ENCODE measurements at regions of chr6 and their contacts with region 1.

Region 1: DNA sequence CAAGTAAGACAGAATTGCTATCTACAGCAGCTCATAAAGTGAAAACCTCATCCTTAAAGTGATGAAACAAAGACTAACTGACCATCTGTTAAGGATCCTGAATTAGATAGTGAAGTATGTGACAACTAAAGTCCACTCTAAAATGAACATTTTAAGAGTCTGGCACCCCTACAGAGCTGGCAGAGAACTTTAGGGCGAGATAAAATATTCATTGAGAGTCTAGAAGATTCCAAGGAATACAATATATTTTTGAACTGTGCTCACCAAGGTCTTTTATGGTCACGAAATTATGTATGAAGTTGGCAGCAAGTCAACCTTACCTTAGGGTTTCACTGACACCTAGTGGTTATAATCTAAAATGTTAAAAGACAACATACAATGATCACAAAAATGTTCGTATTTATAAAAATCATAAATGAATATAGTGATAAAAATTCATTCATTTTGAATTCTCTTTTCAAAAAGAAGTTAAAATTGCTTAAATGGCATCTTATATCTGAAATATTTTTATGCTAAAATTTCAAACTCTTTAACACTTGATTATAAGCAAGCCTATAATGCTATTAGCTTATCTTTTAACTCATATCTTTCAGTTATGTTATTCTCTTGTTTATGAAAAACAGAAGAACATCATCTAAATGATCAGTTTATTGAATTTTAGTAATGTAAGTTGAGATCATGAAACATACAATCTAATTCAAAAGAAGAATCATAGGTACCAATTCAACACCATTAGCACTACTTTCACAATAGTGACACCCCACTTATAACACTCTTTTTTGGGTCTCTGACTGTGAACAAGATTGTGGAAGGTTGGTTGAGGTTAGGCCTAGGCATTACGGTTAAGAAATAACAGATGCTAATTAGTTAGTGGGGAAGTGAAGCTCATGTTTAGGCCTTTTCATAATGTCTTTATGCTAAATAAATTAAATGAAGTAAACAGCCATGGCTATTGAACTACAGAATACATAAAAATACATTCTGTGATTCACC is 27.5 kb downstream of the RSPH3 start:
- DNase-seq: peak; percentile 47
- CTCF ChIP-seq: peak; percentile 39

Region 2: GRCh38 chr6:158584236-158584651 is 388.3 kb before region 1 on chr6:
- CTCF ChIA-PET with region 1: no interaction called
- POLR2A ChIA-PET with region 1: no interaction called
- DNase-seq: no peak
- CTCF ChIP-seq: no peak

Region 3: GRCh38 chr6:158704181-158704822 is 268.2 kb before region 1 on chr6:
- CTCF ChIA-PET with region 1: interaction called, 67 read pairs
- POLR2A ChIA-PET with region 1: no interaction called
- DNase-seq: peak; percentile 91
- CTCF ChIP-seq: peak; percentile 99

Region 4: GRCh38 chr6:158718461-158719046 is 254.0 kb before region 1 on chr6:
- CTCF ChIA-PET with region 1: interaction called, 11 read pairs
- POLR2A ChIA-PET with region 1: no interaction called
- DNase-seq: no peak
- CTCF ChIP-seq: peak; percentile 30

Region 5: DNA sequence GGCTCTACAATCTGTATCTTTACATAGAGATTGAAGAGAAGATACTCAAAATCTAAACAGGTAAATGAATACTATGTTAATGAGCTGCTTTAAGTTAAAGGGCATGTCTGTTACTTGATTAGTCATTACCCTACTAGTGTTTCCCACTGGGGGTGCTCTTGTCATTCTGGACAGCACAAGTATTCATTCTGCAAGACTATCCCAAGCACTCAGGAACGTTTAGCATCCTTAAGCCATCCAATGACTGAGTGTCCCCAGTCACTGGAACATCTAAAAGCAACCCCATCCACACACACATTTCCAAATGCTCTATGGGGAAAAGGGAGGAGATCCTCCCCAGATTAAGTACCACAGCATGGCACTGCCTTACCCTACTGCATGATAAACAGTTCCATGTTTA is 179.1 kb before region 1 on chr6:
- CTCF ChIA-PET with region 1: interaction called, 66 read pairs
- POLR2A ChIA-PET with region 1: no interaction called
- DNase-seq: peak; percentile 55
- CTCF ChIP-seq: peak; percentile 67

Region 6: DNA sequence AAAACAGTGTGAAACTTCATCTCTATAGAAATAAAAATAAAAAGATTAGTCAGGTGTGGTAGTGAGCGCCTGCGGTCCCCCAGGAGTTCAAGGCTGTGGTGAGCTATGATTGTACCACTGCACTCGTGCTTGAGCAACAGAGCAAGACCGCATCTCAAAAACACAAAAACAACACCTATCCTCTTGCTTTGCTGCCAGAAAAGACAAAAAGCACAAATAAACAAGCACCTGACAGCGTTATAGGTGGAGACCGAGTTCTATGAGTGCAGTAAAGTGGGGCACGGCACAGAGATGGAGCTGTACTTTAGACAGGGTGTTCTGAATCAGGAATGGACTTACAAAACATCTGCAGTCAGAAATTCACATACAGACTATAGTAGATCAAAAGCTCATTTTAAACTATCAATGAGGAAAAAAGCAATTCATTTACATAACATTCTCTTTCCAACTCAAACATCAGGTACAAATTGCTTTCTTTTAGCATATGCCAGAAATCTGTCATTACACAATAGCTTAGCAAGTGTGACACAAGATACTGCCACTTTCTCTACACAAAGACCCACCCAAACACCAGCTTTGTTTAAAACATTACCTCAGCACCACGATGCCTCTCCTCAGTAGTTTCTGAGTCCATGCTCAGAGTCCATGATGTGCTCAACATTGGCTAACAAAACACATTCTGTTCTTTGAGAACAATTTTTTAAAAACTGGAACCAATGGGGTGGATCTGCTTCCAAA is 163.4 kb before region 1 on chr6:
- CTCF ChIA-PET with region 1: interaction called, 11 read pairs
- POLR2A ChIA-PET with region 1: no interaction called
- DNase-seq: peak; percentile 39
- CTCF ChIP-seq: no peak

Region 7: GRCh38 chr6:158958504-158959386 is 13.8 kb before region 1 on chr6:
- CTCF ChIA-PET with region 1: interaction called, 25 read pairs
- POLR2A ChIA-PET with region 1: no interaction called
- DNase-seq: no peak
- CTCF ChIP-seq: peak; percentile 21

Region 8: GRCh38 chr6:158999666-159000403 is 27.3 kb after region 1 on chr6 and contains the start of gene RSPH3:
- CTCF ChIA-PET with region 1: interaction called, 14 read pairs
- POLR2A ChIA-PET with region 1: no interaction called
- DNase-seq: peak; percentile 98
- CTCF ChIP-seq: peak; percentile 13

Region 9: DNA sequence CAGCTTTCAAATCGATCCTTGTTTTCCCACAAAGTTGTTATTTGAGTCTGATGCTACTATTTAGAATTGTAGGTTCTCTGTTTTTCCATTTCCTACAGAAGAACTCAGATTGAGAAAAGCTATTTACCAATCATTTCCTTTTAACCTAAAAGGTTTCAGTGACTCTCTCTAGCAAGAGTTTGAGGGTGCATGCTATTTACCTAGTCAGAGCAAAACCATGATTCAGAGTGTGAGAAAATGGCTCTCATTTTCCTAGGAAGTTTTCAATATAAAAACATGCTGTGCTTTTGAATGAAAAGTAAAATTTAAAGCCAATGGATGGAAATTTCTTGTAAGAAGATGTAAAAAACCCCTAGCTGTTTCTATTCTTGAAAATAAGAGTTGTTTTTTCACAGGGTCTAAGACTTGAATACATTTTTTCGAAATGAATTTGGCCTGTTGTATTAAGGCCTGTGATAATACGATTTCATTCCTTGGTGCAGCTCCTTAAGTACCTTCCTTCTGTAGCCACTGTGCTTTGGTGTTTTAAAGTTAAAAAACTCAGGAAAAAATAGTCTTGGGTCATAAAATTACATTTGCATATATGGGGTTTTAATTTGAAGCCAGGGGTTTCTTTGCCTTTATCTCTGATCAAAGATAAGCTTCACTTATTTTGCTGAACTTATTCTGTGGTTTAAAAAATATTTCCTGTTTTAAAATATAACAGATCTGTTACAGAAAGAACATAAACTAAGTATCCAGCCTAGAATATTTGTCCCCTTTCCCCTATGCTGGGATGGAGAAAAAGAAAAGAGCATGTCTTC is 45.4 kb after region 1 on chr6:
- CTCF ChIA-PET with region 1: no interaction called
- POLR2A ChIA-PET with region 1: no interaction called
- DNase-seq: peak; percentile 45
- CTCF ChIP-seq: no peak

Region 10: DNA sequence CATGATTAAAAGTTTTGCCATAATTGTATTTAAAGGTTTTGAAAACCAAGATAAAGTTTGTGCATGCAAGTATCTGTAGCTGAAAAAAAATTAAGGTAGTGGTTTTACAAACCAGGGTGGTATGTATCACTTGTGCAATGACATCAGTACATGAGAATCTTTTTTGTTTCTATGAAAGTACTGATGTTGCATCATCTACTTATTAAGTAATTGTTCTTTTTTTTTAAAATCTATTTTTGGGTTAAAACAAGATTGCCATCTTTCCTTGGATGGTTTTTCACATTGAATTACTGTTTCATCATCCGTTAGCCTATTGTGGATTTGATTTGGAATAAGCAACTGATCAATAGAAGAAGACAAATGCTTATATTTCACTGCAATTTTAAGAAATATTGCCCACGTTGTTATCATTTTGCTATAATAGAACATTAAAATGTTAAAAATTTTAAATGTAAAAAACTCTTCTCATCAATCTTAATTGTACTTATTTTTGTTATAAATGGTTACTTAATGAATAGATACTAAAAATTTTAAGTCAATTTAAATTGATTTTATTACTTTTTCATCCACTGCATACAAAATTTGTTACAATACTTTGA is 112.1 kb after region 1 on chr6:
- CTCF ChIA-PET with region 1: no interaction called
- POLR2A ChIA-PET with region 1: no interaction called
- DNase-seq: no peak
- CTCF ChIP-seq: no peak

Region 11: DNA sequence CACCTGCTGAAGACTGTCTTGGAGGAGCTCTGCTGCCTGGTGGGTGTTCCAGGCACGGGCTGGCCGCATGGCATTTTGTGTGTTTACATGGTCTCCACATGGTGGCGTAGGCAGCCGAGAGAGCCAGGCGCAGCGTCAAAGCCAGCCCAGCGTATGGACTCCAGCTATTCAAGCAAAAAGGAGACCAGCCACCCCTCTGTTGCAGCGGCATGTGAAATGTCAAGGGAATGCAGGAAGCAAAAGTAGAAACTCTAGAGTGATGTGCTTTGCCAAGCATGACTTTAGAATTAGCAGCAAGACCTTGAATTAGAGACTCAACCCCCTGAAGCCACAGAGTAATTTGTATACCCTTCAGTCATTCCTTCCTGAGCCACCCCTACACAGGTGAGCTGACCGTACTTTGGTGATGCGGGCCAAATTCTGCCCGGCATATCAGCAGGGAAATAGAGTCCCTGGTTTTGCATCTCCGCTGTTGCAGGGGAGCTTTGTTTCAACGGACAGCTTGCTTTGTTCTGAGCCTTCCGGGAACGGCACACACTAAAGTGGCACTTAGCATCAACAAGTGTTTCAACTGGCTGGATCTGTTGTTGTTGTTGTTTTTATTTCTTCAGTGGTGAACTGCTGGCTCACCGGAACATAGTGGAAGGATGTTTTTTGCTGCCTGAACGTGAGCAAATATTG is 245.2 kb after region 1 on chr6:
- CTCF ChIA-PET with region 1: no interaction called
- POLR2A ChIA-PET with region 1: no interaction called
- DNase-seq: peak; percentile 67
- CTCF ChIP-seq: peak; percentile 54